HepG2 (cell line): ENCODE measurements at regions of chr2 and their contacts with region 1.

Region 1: DNA sequence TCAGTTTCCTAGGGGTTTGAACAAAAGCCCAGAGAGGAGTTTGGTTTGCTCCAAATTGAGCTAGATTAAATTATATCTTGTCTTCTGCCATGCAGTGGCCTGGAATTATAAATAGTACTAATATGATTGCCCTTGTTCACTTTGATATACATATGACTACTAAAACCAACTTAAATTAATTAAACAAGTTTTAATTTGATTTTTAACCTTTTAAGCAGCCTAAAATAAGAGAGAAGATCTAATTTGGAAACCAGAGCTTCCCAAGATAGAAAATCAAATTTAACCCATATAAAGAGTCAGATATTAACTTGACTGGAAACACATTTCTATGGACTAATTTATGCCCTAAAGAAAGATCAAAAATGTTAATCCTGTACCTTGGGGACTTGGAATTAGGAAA is 444.5 kb upstream of the SLC8A1 start:
- DNase-seq: no peak
- ATAC-seq: no peak
- H3K4me3 ChIP-seq: no peak overlapping the region
- H3K27ac ChIP-seq: no peak overlapping the region
- H3K4me1 ChIP-seq: no peaks in the 10 kb centered on the region
- H3K27me3 ChIP-seq: no peaks in the 10 kb centered on the region
- CTCF ChIP-seq: no peak
- EP300 ChIP-seq: no peak
- POLR2A ChIP-seq: no peak
- RAD21 ChIP-seq: no peak

Region 2: DNA sequence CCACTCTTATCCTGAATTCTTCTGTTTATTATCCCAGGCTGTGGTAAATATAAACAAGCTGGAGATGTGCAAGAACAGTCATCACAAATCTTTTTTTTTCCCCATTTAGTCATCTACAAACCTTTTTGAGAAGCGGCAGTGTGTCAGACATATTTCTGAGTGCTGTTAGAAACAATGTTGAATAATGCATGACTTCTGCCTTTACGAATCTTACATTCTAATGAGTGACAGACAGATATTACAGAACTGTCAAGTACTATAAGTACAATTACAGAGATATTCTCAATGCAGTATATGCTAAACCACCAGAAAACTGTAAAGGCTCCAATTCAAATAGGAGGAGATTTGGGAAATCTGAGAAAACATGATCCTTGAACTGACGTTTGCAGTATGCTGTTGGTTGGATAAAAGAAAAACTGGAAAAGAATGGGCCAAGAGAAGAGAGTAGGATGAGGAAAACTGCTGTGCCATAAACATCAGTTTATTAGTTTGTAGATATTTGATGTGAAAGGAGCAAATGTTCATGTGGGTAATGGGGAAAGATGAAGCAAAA is 65.0 kb before region 1 on chr2:
- CTCF ChIA-PET with region 1: no interaction called
- POLR2A ChIA-PET with region 1: no interaction called
- in situ Hi-C with region 1: no loop called
- intact Hi-C with region 1: loop called (anchors 2 kb)
- DNase-seq: no peak
- ATAC-seq: no peak
- H3K4me3 ChIP-seq: no peak overlapping the region
- H3K27ac ChIP-seq: no peak overlapping the region
- H3K4me1 ChIP-seq: no peaks in the 10 kb centered on the region
- H3K27me3 ChIP-seq: no peaks in the 10 kb centered on the region
- CTCF ChIP-seq: no peak
- EP300 ChIP-seq: no peak
- POLR2A ChIP-seq: no peak
- RAD21 ChIP-seq: no peak

Region 3: GRCh38 chr2:41180387-41180786 is 284.0 kb after region 1 on chr2:
- CTCF ChIA-PET with region 1: no interaction called
- POLR2A ChIA-PET with region 1: no interaction called
- in situ Hi-C with region 1: no loop called
- intact Hi-C with region 1: no loop called
- DNase-seq: no peak
- ATAC-seq: no peak
- H3K4me3 ChIP-seq: no peak overlapping the region
- H3K27ac ChIP-seq: no peak overlapping the region
- H3K4me1 ChIP-seq: no peaks in the 10 kb centered on the region
- H3K27me3 ChIP-seq: no peaks in the 10 kb centered on the region
- CTCF ChIP-seq: no peak
- EP300 ChIP-seq: no peak
- POLR2A ChIP-seq: no peak
- RAD21 ChIP-seq: no peak